ENCODE measurements at regions of chr19 and their contacts with region 1.

Region 1: GRCh38 chr19:46431824-46432223 is 3.1 kb upstream of the PNMA8C start:
- DNase-seq: peak in 2 of 3 donors; percentile 32 to 41
- H3K4me3 ChIP-seq: no peak overlapping the region
- H3K27ac ChIP-seq: no peak overlapping the region
- H3K4me1 ChIP-seq: peaks cover 0 to 14% (median 8%) of the 10 kb centered on the region in 4 experiments
- H3K27me3 ChIP-seq: peaks cover 4 to 46% (median 18%) of the 10 kb centered on the region in 5 experiments

Region 2: GRCh38 chr19:46404055-46404752 is 27.6 kb before region 1 on chr19:
- CTCF ChIA-PET with region 1: interaction called, 15 read pairs
- POLR2A ChIA-PET with region 1: interaction called, 3 read pairs
- DNase-seq: peak in 2 of 3 donors; percentile 68 to 75
- H3K4me3 ChIP-seq: peak overlapping the region in 5 of 7 experiments; percentile 29 to 59 (median 44)
- H3K27ac ChIP-seq: no peak overlapping the region
- H3K4me1 ChIP-seq: peaks cover 0 to 22% (median 18%) of the 10 kb centered on the region in 4 experiments
- H3K27me3 ChIP-seq: peaks cover 3 to 64% (median 31%) of the 10 kb centered on the region in 5 experiments

Region 3: GRCh38 chr19:46447824-46448223 is 16.0 kb after region 1 on chr19:
- CTCF ChIA-PET with region 1: no interaction called
- POLR2A ChIA-PET with region 1: no interaction called
- DNase-seq: no peak
- H3K4me3 ChIP-seq: no peak overlapping the region
- H3K27ac ChIP-seq: no peak overlapping the region
- H3K4me1 ChIP-seq: peaks cover 0 to 3% (median 0%) of the 10 kb centered on the region in 4 experiments
- H3K27me3 ChIP-seq: peaks cover 0 to 20% (median 0%) of the 10 kb centered on the region in 5 experiments

Measured in common myeloid progenitor, CD34-positive (primary cell).